ENCODE measurements at regions of chr9 and their contacts with region 1.

Region 1: DNA sequence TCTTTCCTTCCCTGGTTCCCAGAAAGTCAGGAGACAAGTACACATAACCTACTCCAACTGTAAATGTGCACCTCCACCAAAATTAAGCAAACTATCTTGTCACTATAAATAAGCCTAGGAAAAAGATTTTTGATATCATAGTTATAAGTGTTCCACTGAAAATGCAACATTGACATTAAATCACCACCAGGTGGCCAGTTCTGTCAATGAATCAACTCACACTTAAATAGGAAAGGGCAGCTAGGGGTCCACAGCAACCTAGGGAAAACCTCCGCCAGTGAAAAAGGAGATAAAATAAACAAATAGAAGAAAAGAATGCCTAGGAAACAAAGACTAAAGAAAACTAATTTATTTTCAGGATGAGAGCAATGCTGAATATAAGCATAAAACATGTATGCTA is 243.1 kb upstream of the PTPRD start:
- DNase-seq: no peak
- H3K4me3 ChIP-seq: no peak overlapping the region
- H3K27ac ChIP-seq: no peak overlapping the region
- H3K4me1 ChIP-seq: no peaks in the 10 kb centered on the region
- H3K27me3 ChIP-seq: no peaks in the 10 kb centered on the region
- CTCF ChIP-seq: peak in 2 of 3 experiments; percentile 60 to 85; a peak in 3 of 4 replicates
- EP300 ChIP-seq: no peak
- POLR2A ChIP-seq: no peak
- RAD21 ChIP-seq: peak; percentile 77 to 79

Region 2: DNA sequence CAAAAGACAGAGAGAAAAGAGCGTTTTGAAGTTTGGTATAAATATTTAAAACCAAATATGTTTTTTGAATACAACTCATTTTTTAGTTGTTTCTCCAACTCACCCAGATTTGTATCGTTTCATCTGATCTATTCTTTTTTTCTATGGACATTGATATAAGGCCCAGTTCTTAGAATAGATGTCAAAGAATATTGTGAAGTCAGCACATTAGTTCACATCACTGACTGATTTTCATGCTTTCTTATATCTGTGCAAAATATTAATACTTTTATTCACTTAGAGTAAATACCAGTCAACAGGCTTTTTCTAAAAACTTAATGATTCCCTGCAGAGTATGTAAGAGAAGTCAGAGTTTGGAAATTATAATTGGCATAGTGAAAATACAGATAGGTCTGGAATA is 11.3 kb after region 1 on chr9:
- CTCF ChIA-PET with region 1: interaction called, 14 read pairs
- POLR2A ChIA-PET with region 1: no interaction called
- DNase-seq: no peak
- H3K4me3 ChIP-seq: no peak overlapping the region
- H3K27ac ChIP-seq: no peak overlapping the region
- H3K4me1 ChIP-seq: no peaks in the 10 kb centered on the region
- H3K27me3 ChIP-seq: no peaks in the 10 kb centered on the region
- CTCF ChIP-seq: no peak
- EP300 ChIP-seq: no peak
- POLR2A ChIP-seq: no peak
- RAD21 ChIP-seq: no peak